ENCODE measurements at regions of chrX and their contacts with region 1.

Region 1: GRCh38 chrX:48789366-48790220 is 3.2 kb downstream of the GATA1 start:
- DNase-seq: peak in 2 of 4 experiments; percentile 50 to 75
- ATAC-seq: no peak
- H3K4me3 ChIP-seq: peak overlapping the region; percentile 75
- H3K27ac ChIP-seq: peak overlapping the region; percentile 85
- H3K4me1 ChIP-seq: peaks cover 51 to 65% of the 10 kb centered on the region in 2 experiments
- H3K27me3 ChIP-seq: no peaks in the 10 kb centered on the region
- CTCF ChIP-seq: no peak
- EP300 ChIP-seq: peak; percentile 38; the same call in 1 of the 2 replicates
- POLR2A ChIP-seq: no peak
- RAD21 ChIP-seq: no peak

Region 2: GRCh38 chrX:48696301-48697181 is 93.1 kb before region 1 on chrX and contains the start of gene SUV39H1:
- CTCF ChIA-PET with region 1: no interaction called
- POLR2A ChIA-PET with region 1: interaction called, 4 read pairs
- in situ Hi-C with region 1: no loop called
- intact Hi-C with region 1: loop called (anchors 5 kb)
- DNase-seq: peak; percentile 90 to 93 (median 91)
- ATAC-seq: peak; percentile 97
- H3K4me3 ChIP-seq: peak within 1 kb of the TSS; percentile 80
- H3K27ac ChIP-seq: peak within 1 kb of the TSS; percentile 95
- H3K4me1 ChIP-seq: peaks cover 29 to 34% of the 10 kb centered on the region in 2 experiments
- H3K27me3 ChIP-seq: no peaks in the 10 kb centered on the region
- CTCF ChIP-seq: no peak
- EP300 ChIP-seq: peak; percentile 41; the same call in 1 of the 2 replicates
- POLR2A ChIP-seq: peak; percentile 63
- RAD21 ChIP-seq: no peak
- polyA plus RNA-seq, gene SUV39H1: 4.7 to 6.5 TPM

Region 3: GRCh38 chrX:48848847-48849246 is 59.3 kb after region 1 on chrX:
- CTCF ChIA-PET with region 1: no interaction called
- POLR2A ChIA-PET with region 1: no interaction called
- in situ Hi-C with region 1: no loop called
- intact Hi-C with region 1: no loop called
- DNase-seq: no peak
- ATAC-seq: no peak
- H3K4me3 ChIP-seq: no peak overlapping the region
- H3K27ac ChIP-seq: no peak overlapping the region
- H3K4me1 ChIP-seq: peaks cover 0 to 4% of the 10 kb centered on the region in 2 experiments; a peak in 2 of 5 replicates
- H3K27me3 ChIP-seq: no peaks in the 10 kb centered on the region
- CTCF ChIP-seq: no peak
- EP300 ChIP-seq: no peak
- POLR2A ChIP-seq: no peak
- RAD21 ChIP-seq: no peak